MCF 10A (cell line): ENCODE measurements at regions of chr15 and their contacts with region 1.

Region 1: GRCh38 chr15:89760303-89761008 is 9.4 kb upstream of the MESP1 start:
- DNase-seq: peak; percentile 89
- H3K4me3 Mint-ChIP-seq: no peak overlapping the region
- H3K27ac Mint-ChIP-seq: no peak overlapping the region
- H3K4me1 Mint-ChIP-seq: peaks cover 9% of the 10 kb centered on the region
- H3K27me3 Mint-ChIP-seq: no peaks in the 10 kb centered on the region
- CTCF ChIP-seq: peak; percentile 92

Region 2: DNA sequence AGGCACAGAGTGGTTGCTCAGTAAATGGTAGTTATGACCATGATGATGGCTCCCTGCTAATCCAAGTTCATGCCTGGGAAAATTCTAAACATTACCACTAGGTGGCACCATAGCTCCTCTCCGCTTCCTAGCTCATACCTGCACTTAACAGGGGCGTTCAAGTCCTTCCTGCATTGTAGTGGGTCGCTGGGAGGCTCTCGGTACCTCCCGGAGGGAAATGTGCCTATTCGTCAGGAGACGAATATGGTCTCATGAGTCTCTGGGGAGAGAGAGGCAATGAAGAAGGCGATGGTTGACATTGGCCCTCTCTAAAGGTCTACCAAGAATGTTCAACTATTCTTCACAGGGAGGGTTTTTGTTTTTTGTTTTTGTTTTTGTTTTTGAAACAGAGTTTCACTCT is 20.3 kb before region 1 on chr15:
- CTCF ChIA-PET with region 1: interaction called, 8 read pairs
- POLR2A ChIA-PET with region 1: no interaction called
- intact Hi-C with region 1: loop called (anchors 1 kb)
- DNase-seq: peak; percentile 78
- H3K4me3 Mint-ChIP-seq: no peak overlapping the region
- H3K27ac Mint-ChIP-seq: no peak overlapping the region
- H3K4me1 Mint-ChIP-seq: no peaks in the 10 kb centered on the region
- H3K27me3 Mint-ChIP-seq: peaks cover 19% of the 10 kb centered on the region
- CTCF ChIP-seq: peak; percentile 89

Region 3: GRCh38 chr15:89781891-89782618 is 21.6 kb after region 1 on chr15:
- CTCF ChIA-PET with region 1: interaction called, 28 read pairs
- POLR2A ChIA-PET with region 1: no interaction called
- intact Hi-C with region 1: no loop called
- DNase-seq: peak; percentile 84
- H3K4me3 Mint-ChIP-seq: peak overlapping the region; percentile 48
- H3K27ac Mint-ChIP-seq: peak overlapping the region; percentile 55
- H3K4me1 Mint-ChIP-seq: peaks cover 24% of the 10 kb centered on the region
- H3K27me3 Mint-ChIP-seq: no peaks in the 10 kb centered on the region
- CTCF ChIP-seq: no peak

Region 4: GRCh38 chr15:89820666-89821611 is 60.5 kb after region 1 on chr15:
- CTCF ChIA-PET with region 1: interaction called, 11 read pairs
- POLR2A ChIA-PET with region 1: interaction called, 3 read pairs
- intact Hi-C with region 1: no loop called
- DNase-seq: peak; percentile 88
- H3K4me3 Mint-ChIP-seq: peak overlapping the region; percentile 33
- H3K27ac Mint-ChIP-seq: peak overlapping the region; percentile 81
- H3K4me1 Mint-ChIP-seq: peaks cover 43% of the 10 kb centered on the region
- H3K27me3 Mint-ChIP-seq: no peaks in the 10 kb centered on the region
- CTCF ChIP-seq: no peak

Region 5: GRCh38 chr15:89836255-89837133 is 76.0 kb after region 1 on chr15:
- CTCF ChIA-PET with region 1: interaction called, 21 read pairs
- POLR2A ChIA-PET with region 1: interaction called, 5 read pairs
- intact Hi-C with region 1: no loop called
- DNase-seq: peak; percentile 94
- H3K4me3 Mint-ChIP-seq: peak overlapping the region; percentile 63
- H3K27ac Mint-ChIP-seq: peak overlapping the region; percentile 98
- H3K4me1 Mint-ChIP-seq: peaks cover 35% of the 10 kb centered on the region
- H3K27me3 Mint-ChIP-seq: no peaks in the 10 kb centered on the region
- CTCF ChIP-seq: no peak

Region 6: DNA sequence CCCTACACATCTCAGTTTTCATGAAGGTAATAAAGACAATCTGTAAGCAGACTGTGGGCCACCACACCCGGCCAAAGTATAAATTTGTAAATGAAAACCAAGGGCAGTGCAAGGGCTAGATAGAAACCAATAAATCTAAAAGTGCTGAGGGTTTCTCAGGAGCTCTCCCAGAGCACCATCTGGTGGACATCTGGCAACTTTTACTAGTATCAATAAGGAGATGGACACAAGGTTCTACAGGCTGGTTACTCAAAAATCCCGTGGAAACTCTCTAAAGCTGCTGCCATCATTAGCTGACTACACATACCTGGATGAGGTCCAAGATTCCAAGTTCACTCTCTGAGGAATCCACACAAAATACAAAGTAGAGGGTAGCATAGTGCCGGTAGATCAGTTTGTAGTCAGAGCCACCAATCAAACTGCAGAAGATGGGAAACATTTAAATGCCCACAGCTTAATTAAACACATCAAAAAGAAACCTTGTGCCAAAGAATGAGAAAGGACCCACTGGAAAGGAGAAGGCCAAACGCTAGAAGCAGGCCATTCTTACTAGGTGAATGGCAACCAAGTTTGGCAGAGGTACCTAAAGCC is 127.9 kb after region 1 on chr15:
- CTCF ChIA-PET with region 1: interaction called, 93 read pairs
- POLR2A ChIA-PET with region 1: interaction called, 5 read pairs
- intact Hi-C with region 1: loop called (anchors 1 kb)
- DNase-seq: peak; percentile 70
- H3K4me3 Mint-ChIP-seq: no peak overlapping the region
- H3K27ac Mint-ChIP-seq: no peak overlapping the region
- H3K4me1 Mint-ChIP-seq: no peaks in the 10 kb centered on the region
- H3K27me3 Mint-ChIP-seq: no peaks in the 10 kb centered on the region
- CTCF ChIP-seq: peak; percentile 51

Region 7: GRCh38 chr15:89910891-89911626 is 150.6 kb after region 1 on chr15:
- CTCF ChIA-PET with region 1: no interaction called
- POLR2A ChIA-PET with region 1: no interaction called
- intact Hi-C with region 1: no loop called
- DNase-seq: no peak
- H3K4me3 Mint-ChIP-seq: peak overlapping the region; percentile 76
- H3K27ac Mint-ChIP-seq: no peak overlapping the region
- H3K4me1 Mint-ChIP-seq: peaks cover 12% of the 10 kb centered on the region
- H3K27me3 Mint-ChIP-seq: no peaks in the 10 kb centered on the region
- CTCF ChIP-seq: no peak